ENCODE measurements at regions of chr9 and their contacts with region 1.

Region 1: GRCh38 chr9:126514047-126514821 is 99.5 kb upstream of the LMX1B start:
- DNase-seq: peak; percentile 42
- H3K4me3 Mint-ChIP-seq: no peak overlapping the region
- H3K27ac Mint-ChIP-seq: no peak overlapping the region
- H3K4me1 Mint-ChIP-seq: peaks cover 31% of the 10 kb centered on the region
- H3K27me3 Mint-ChIP-seq: peaks cover 67% of the 10 kb centered on the region

Region 2: GRCh38 chr9:125521462-125522327 is 992.5 kb before region 1 on chr9:
- intact Hi-C with region 1: loop called (anchors 2 kb)
- DNase-seq: peak; percentile 38
- H3K4me3 Mint-ChIP-seq: peak overlapping the region; percentile 61
- H3K27ac Mint-ChIP-seq: peak overlapping the region; percentile 91
- H3K4me1 Mint-ChIP-seq: peaks cover 33% of the 10 kb centered on the region
- H3K27me3 Mint-ChIP-seq: no peaks in the 10 kb centered on the region

Region 3: GRCh38 chr9:126411225-126411947 is 102.8 kb before region 1 on chr9:
- intact Hi-C with region 1: loop called (anchors 1 kb)
- DNase-seq: peak; percentile 50
- H3K4me3 Mint-ChIP-seq: peak overlapping the region; percentile 71
- H3K27ac Mint-ChIP-seq: peak overlapping the region; percentile 37
- H3K4me1 Mint-ChIP-seq: peaks cover 29% of the 10 kb centered on the region
- H3K27me3 Mint-ChIP-seq: peaks cover 6% of the 10 kb centered on the region

Region 4: GRCh38 chr9:126471084-126471624 is 43.1 kb before region 1 on chr9:
- intact Hi-C with region 1: loop called (anchors 1 kb)
- DNase-seq: peak; percentile 81
- H3K4me3 Mint-ChIP-seq: peak overlapping the region; percentile 58
- H3K27ac Mint-ChIP-seq: peak overlapping the region; percentile 89
- H3K4me1 Mint-ChIP-seq: peaks cover 47% of the 10 kb centered on the region
- H3K27me3 Mint-ChIP-seq: peaks cover 50% of the 10 kb centered on the region

Region 5: DNA sequence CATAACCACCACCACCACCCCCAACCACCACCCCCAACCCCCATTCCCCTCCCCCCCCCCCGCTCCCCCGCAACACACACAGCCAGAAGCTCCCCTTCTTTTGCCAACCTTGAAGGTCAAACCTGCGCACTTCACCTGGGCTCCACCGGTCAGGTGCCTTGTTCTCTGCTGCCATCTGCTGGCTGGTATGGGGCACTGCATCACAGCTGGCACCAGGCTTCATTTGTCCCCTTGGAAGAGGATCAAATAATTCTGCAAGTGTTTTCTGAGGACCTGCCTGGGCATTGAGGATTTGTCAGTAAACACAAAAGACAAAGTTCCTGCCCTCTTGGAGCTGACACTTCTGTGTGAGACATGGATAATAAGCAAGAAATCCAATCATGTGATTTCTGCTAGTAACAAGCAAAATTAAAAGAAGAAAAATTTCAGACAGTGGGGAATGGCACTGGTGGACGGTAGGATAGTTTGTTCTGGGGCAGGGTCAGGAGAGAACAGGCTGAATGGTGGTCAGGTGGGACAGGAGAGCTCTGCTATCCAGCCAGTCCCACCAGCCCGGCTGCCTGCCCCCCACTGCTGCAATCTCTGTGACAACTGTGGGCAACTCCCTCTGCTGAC is 43.9 kb after region 1 on chr9:
- intact Hi-C with region 1: loop called (anchors 5 kb)
- DNase-seq: peak; percentile 49
- H3K4me3 Mint-ChIP-seq: no peak overlapping the region
- H3K27ac Mint-ChIP-seq: no peak overlapping the region
- H3K4me1 Mint-ChIP-seq: no peaks in the 10 kb centered on the region
- H3K27me3 Mint-ChIP-seq: peaks cover 8% of the 10 kb centered on the region

Region 6: DNA sequence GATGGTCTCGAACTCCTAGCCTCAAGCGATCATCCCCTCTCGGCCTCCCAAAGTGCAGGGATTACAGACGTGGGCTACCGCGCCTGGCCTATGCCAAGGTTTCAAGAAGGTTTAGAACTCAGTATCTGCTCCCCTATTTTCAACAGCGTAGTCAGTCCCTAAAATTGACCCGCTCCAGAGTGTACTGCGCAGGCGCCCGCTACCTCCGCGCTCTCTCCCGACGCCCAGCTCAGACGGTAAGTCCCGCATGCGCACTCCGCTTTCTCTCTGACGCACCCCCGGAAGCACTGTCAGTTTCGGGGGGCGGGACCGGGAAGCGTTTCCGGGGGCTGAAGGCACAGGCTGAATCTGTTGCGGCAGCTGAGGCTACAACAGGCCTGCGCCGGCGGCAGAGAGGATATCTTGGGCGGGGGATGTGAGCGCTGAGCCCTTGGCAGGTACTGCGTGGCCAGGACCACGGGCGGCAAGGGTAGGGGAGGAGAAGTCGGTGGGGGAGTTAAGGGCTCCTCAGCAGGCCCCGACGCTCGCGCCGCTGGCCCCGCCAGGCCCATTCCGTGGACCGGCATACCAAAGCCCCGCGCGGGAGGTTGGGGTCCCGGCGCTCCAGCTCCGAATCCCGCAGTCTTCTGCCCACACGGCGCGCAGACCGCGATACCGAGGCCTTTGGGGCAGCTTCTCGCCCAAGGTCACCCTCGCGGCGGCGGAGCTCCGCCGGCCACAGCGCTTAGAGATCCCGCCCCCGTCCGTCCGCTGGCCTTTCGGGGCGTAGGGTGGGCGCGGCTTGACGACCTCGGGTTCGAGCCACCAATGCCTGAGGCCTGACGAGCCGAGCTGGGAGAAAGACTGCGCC is 290.7 kb after region 1 on chr9 and contains the start of gene ZBTB43:
- intact Hi-C with region 1: loop called (anchors 1 kb)
- DNase-seq: peak; percentile 98
- H3K4me3 Mint-ChIP-seq: peak within 1 kb of the TSS; percentile 92
- H3K27ac Mint-ChIP-seq: peak within 1 kb of the TSS; percentile 99
- H3K4me1 Mint-ChIP-seq: peaks cover 27% of the 10 kb centered on the region
- H3K27me3 Mint-ChIP-seq: peaks cover 2% of the 10 kb centered on the region
- total RNA-seq, gene ZBTB43: 11.6 and 21.2 TPM in 2 replicates